Lower lobe of right lung (tissue), 2 donors: ENCODE measurements at regions of chr9 and their contacts with region 1.

Region 1: DNA sequence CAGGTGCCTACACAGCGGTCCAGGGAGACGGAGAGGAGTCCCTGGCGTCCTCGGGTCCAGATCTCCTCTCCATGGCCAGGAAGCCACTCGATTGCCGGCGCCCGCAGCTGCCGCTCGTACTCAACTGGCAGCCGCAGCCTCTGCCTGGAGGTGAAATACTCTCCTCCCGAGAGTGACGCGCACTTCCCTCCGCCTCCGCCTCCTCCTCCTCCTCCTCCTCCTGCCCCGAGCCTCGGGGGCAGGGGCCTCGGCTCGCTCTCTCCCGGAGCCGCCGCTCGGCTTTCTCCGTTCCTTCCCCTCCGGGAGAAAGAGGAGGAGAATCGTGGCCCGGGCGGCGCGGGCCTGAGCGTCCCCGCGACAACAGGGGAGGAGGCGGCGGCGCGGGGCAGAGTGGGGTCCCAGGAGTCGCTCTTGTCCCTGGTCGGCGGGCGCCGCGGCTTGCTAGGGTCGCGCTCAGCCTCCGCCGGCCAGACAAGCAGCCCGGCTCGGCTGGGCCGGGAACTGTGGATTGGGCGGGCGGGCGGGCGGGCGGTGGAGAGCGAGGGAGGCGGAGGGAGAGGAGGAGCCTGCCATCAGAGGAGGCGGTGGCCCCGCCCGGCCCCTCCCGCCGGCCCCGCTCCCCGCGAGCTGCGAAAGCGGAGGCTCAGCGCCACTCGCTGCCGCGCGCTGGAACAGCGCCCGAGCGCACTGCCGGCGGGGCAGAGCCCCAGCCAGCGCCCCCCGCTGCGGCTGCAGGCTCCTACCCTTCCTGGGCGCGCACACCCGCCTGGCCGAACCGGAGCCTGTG is at the start of gene CEMIP2:
- DNase-seq: peak; percentile 94
- ATAC-seq: peak; percentile 91 to 95
- H3K4me3 ChIP-seq: peak within 1 kb of the TSS; percentile 88
- H3K27ac ChIP-seq: peak within 1 kb of the TSS; percentile 96
- H3K4me1 ChIP-seq: peaks cover 43% of the 10 kb centered on the region
- H3K27me3 ChIP-seq: no peaks in the 10 kb centered on the region
- CTCF ChIP-seq: peak; percentile 55
- total RNA-seq, gene CEMIP2: 152 TPM

Region 2: GRCh38 chr9:71604197-71605063 is 164.2 kb before region 1 on chr9:
- intact Hi-C with region 1: loop called (anchors 10 kb)
- DNase-seq: peak; percentile 75
- ATAC-seq: peak; percentile 85 to 94
- H3K4me3 ChIP-seq: no peak overlapping the region
- H3K27ac ChIP-seq: no peak overlapping the region
- H3K4me1 ChIP-seq: peaks cover 7% of the 10 kb centered on the region
- H3K27me3 ChIP-seq: no peaks in the 10 kb centered on the region
- CTCF ChIP-seq: peak; percentile 83